ENCODE measurements at regions of chr12 and their contacts with region 1.

Region 1: DNA sequence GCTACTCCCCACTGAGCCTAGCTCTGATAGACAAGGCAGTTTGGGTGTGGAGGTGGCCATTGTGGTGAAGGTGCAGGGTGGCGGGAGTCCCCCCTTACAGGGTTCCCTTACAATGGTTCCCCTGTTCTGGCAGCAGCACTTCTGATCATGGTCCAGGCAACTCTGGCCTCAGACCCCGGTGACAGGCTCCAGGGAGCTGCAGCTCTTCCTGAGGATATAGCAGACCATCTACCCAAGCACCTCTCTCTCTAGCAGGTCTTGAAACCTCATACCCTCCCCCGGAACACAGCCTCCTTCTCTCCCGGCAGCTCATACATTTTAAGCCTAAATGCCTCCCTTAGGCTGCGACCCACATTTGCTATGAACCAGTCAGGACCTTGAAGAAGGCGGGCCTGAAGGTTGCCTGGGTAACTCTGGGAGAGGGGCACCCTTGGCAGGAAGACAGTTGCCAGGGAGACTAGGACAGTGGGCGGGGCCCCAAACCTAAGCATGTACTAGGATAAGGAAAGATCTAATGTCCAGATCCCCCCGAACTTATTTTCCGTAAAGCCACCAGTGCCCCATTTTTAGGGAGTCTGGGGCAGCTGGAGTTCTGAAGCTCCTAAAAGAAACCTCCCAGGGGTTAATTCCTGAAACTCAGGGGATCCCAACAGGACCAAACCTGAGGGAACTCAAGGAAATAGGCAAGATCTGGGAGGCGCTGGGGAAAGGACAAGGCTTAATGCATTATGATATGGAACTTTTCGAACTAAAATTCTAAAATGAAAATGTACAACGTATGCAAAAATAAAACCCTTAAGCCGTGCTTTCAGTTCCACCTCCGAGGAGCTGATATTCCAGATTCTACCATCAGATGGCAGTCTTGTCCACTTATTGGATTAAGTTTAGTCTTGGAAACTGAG is 4.5 kb upstream of the GDF11 start:
- DNase-seq: peak; percentile 71 to 97 (median 88)

Region 2: GRCh38 chr12:55797068-55797467 is 58.7 kb after region 1 on chr12:
- intact Hi-C with region 1: loop called (anchors 5 kb)
- DNase-seq: peak in 35 of 42 donors; percentile 12 to 78 (median 53)

Region 3: GRCh38 chr12:55817346-55818139 is 79.2 kb after region 1 on chr12 and contains the starts of genes ORMDL2 and SARNP:
- intact Hi-C with region 1: loop called (anchors 5 kb)
- DNase-seq: peak; percentile 94 to 100 (median 99)

Region 4: DNA sequence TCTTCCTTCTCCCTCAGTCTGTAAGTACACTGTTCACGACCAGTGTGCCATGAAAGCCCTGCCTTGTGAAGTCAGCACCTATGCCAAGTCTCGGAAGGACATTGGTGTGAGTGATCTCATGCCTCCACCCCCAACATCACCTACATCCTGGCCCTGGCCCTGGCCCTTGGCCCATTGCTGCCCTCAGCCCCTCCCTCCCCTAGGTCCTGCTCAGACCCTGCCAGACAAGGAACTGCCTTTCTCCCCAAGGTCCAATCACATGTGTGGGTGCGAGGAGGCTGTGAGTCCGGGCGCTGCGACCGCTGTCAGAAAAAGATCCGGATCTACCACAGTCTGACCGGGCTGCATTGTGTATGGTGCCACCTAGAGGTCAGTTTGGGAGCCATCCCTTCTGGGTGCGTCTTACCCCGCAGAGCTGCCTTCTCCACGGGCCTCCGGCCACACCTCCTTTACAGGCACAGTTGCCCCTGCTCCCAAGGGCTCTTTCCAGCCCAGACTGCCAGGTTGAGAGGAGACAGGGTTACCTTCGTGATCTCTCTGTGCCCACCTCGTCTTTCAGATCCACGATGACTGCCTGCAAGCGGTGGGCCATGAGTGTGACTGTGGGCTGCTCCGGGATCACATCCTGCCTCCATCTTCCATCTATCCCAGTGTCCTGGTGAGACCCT is 201.8 kb after region 1 on chr12:
- intact Hi-C with region 1: loop called (anchors 5 kb)
- DNase-seq: peak; percentile 69 to 94 (median 87)

Measured in head of caudate nucleus (tissue), 42 donors.